Activated naive CD4-positive, alpha-beta T cell treated with anti-CD3 and anti-CD28 coated beads, Interleukin-2, amount 10 ng/mL, durations not matched to agents 7 days and 5 days (primary cell): ENCODE measurements at regions of chr15 and their contacts with region 1.

Region 1: DNA sequence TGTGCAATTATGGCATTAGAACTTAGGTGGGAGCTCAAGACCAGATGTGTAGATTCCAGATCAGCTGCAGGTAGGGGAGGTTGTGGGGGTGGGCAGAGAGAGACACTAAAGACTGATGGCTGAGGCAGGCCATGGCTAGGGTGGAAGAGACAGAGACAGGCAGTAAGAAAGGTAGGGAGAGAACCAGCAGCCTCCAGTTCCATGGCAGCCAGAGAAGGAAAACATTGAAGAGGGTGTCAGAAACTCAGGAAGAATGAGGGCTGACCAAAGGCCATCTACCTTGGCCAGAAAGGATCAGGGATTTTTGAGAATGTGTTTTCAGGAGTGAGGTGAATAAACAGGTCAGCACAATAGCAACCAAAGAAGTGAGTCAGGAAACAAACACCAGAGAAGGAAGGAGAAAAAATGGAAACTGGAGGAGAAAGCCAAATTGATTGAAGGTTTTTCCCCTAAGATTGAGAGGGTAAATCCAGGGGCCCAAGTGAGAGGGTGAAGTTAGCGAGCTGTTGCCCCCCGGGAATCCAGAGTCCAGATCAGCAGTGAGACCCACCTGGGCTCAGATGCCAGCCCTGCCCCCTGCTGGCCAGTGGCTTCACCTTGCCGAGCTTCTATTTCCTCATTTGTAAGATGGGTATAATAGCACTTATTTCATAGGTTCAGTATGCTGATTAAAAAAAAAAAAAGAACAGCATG is 41.0 kb downstream of the ABHD2 start:
- DNase-seq: peak; percentile 71
- H3K4me3 Mint-ChIP-seq: no peak overlapping the region
- H3K27ac Mint-ChIP-seq: no peak overlapping the region
- H3K4me1 Mint-ChIP-seq: peaks cover 12% of the 10 kb centered on the region
- H3K27me3 Mint-ChIP-seq: no peaks in the 10 kb centered on the region

Region 2: DNA sequence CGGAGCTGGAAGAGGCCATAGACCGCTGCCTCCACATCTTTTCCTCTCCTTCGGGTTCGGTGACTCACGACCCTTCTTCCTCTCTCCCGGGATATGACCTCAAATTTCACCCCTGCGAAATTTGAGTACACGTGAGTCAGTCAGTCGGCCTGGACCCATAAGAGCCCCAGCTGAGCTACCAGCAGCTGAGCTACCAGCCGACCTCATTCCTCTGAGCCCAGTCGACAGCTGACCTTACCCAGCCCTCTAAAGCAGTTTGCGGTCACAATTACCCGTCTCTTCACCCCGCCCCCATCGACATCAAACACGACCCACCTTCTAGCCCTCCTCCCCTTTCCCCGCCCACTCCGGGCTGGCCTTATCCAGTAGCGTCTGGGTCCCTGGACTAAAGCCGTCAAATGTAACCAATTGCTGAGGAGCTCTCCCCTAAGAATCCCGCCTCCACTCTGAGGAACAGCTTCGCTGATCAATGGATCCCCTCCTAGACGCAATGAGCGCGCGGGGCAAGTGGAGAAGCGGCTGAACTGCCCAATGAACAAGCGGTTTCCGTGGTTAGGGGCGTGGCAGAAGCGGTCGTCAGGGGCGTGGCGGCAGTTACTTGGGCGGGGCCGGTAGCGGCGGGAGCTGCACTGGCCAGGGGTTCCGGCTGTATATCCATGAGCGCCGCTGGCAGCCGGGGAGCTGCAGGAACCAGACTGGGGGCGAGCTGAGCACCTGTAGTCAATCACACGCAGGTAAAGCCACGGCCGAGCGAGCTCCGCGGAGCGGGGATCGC is 41.3 kb before region 1 on chr15 and contains the start of gene ABHD2:
- CTCF ChIA-PET with region 1: interaction called, 19 read pairs
- DNase-seq: peak; percentile 98
- H3K4me3 Mint-ChIP-seq: no peak within 1 kb of the TSS
- H3K27ac Mint-ChIP-seq: peak within 1 kb of the TSS; percentile 78
- H3K4me1 Mint-ChIP-seq: peaks cover 35% of the 10 kb centered on the region
- H3K27me3 Mint-ChIP-seq: peaks cover 3% of the 10 kb centered on the region

Region 3: DNA sequence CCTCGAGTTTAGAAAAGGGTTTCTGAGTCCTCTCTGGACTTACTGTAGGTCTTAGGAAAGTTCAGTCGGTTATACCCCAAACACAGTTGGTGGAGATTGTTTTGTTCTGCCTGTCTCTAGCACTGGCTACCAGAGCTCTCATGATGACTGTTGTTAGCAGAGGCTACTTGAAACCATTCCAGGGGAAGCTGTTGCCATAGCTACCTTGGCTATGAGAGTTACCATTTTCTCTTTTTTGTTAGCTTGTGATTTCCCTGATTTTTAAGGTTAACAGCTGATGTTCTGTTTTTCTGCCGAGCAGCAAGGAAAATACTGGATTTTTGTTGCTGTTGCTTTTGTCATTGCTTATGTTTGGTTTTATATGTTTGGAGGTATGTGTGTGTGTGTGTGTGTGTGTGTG is 14.3 kb before region 1 on chr15:
- CTCF ChIA-PET with region 1: interaction called, 17 read pairs
- DNase-seq: no peak
- H3K4me3 Mint-ChIP-seq: no peak overlapping the region
- H3K27ac Mint-ChIP-seq: no peak overlapping the region
- H3K4me1 Mint-ChIP-seq: peaks cover 8% of the 10 kb centered on the region
- H3K27me3 Mint-ChIP-seq: no peaks in the 10 kb centered on the region

Region 4: DNA sequence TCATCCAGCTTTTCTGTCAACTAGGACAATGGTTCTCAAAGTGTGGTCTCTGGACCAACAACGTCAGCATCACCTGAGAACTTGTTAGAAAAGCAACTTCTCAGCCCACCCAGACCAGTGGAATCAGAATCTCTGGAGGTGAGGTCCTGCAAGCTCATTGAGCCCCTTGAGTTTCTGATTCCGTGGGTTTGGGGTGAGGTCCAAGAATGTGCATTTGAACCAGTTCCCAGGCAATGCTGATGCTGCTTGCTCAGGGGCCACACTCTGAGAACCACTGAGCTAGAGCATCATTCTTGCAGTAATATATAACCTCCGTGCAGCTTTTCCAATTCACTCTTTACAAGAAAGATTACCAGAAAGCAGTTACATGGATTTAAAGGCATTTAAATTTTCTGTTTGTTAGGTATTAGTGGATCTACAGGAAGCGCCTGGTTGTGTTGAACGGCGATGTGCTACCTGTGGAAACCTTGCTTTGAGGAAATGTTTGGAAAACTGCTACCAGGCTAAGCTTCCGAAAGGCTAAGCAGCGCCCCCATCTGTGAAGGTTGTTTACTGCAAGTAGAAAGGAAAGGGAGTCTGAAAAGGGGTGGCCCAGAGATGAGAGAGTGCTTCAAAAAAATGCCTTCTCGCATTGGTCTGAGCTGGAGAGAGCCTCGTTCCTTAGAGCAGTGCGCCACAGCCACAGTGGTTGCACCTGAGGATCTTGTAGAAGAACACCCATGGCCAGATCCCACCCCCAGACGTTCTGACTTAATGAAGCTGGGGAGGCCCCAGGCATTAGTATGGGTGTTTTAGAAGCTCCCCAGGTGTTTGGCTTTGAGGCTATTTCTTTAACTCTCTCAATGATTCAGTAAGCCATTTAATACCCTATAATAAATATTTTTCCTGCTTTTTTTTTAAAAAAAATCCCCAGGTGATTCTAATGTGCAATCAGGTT is 42.1 kb after region 1 on chr15:
- CTCF ChIA-PET with region 1: interaction called, 17 read pairs
- DNase-seq: peak; percentile 44
- H3K4me3 Mint-ChIP-seq: no peak overlapping the region
- H3K27ac Mint-ChIP-seq: no peak overlapping the region
- H3K4me1 Mint-ChIP-seq: peaks cover 11% of the 10 kb centered on the region
- H3K27me3 Mint-ChIP-seq: no peaks in the 10 kb centered on the region

Region 5: GRCh38 chr15:89177633-89178306 is 48.5 kb after region 1 on chr15:
- CTCF ChIA-PET with region 1: interaction called, 14 read pairs
- DNase-seq: peak; percentile 82
- H3K4me3 Mint-ChIP-seq: no peak overlapping the region
- H3K27ac Mint-ChIP-seq: peak overlapping the region; percentile 73
- H3K4me1 Mint-ChIP-seq: peaks cover 6% of the 10 kb centered on the region
- H3K27me3 Mint-ChIP-seq: no peaks in the 10 kb centered on the region

Region 6: DNA sequence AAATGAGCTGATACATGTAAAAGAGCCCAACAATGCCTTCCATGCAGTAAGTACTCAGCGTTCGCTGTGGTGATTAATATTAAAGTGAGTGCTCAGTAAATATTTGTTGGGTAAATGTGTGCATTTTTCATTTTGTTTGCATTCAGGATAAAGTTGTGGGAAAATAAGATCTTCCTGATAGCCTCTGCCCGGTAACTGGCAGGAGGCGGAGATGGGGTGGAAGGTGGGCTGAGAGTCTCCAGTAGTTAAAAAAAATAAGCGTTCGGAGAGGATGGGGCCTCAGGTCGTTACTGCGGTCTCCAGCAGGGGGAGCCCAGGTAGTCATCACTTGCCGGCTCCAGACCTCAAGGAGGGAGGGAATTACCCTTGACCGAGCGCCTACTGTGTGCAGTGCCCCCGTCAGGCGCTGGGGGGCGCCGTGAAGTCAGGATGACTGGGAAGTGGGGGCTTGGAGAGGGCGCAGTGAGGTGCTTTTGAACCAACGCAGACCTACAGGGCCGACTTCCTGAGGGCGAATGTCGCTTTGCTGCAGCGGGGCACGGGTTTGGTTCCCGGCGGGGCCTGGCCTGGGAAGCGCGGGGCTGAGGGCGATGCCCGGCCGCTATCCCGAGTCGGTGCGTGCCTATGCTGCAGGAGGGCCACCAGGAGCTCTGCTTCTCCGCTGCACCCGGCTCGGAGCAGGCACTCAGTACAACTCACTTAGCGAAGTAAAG is 287.0 kb after region 1 on chr15:
- CTCF ChIA-PET with region 1: no interaction called
- DNase-seq: peak; percentile 82
- H3K4me3 Mint-ChIP-seq: no peak overlapping the region
- H3K27ac Mint-ChIP-seq: no peak overlapping the region
- H3K4me1 Mint-ChIP-seq: peaks cover 7% of the 10 kb centered on the region
- H3K27me3 Mint-ChIP-seq: peaks cover 96% of the 10 kb centered on the region